Activated CD8-positive, alpha-beta T cell treated with anti-CD3 and anti-CD28 coated beads for 36 hours (primary cell): ENCODE measurements at regions of chr17 and their contacts with region 1.

Region 1: GRCh38 chr17:63478791-63479494 is 2.1 kb downstream of the ACE start:
- DNase-seq: peak; percentile 88
- ATAC-seq: peak; percentile 87
- H3K4me3 Mint-ChIP-seq: no peak overlapping the region
- H3K27ac Mint-ChIP-seq: no peak overlapping the region
- H3K4me1 Mint-ChIP-seq: peaks cover 10% of the 10 kb centered on the region
- H3K27me3 Mint-ChIP-seq: peaks cover 29% of the 10 kb centered on the region
- CTCF ChIP-seq: peak; percentile 74

Region 2: DNA sequence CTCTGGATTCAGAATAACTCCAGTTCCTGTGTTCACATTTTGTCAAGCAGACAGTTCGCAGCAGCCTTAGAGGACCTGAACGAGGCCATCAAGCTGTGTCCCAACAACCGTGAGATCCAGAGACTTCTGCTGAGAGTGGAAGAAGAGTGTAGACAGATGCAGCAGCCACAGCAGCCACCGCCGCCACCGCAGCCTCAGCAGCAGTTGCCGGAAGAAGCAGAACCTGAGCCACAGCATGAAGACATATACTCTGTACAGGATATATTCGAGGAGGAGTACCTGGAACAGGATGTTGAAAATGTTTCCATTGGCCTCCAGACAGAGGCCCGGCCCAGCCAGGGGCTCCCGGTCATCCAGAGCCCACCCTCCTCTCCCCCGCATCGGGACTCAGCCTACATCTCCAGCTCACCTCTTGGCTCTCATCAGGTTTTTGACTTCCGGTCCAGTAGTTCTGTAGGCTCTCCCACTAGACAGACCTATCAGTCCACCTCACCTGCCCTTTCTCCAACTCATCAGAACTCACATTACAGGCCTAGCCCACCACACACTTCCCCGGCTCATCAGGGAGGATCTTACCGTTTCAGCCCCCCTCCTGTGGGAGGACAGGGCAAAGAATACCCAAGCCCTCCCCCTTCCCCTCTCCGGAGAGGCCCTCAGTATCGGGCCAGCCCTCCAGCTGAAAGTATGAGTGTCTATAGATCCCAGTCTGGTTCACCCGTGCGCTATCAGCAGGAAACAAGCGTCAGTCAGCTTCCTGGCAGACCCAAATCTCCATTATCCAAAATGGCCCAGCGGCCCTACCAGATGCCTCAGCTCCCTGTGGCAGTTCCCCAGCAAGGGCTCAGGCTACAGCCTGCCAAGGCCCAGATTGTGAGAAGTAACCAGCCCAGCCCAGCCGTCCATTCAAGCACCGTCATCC is 58.7 kb before region 1 on chr17:
- CTCF ChIA-PET with region 1: interaction called, 231 read pairs
- POLR2A ChIA-PET with region 1: interaction called, 6 read pairs
- intact Hi-C with region 1: loop called (anchors 2 kb)
- DNase-seq: peak; percentile 73
- ATAC-seq: peak; percentile 73
- H3K4me3 Mint-ChIP-seq: peak overlapping the region; percentile 1
- H3K27ac Mint-ChIP-seq: peak overlapping the region; percentile 69
- H3K4me1 Mint-ChIP-seq: peaks cover 11% of the 10 kb centered on the region
- H3K27me3 Mint-ChIP-seq: no peaks in the 10 kb centered on the region
- CTCF ChIP-seq: no peak

Region 3: GRCh38 chr17:63434876-63435684 is 43.9 kb before region 1 on chr17:
- CTCF ChIA-PET with region 1: interaction called, 231 read pairs
- POLR2A ChIA-PET with region 1: no interaction called
- intact Hi-C with region 1: no loop called
- DNase-seq: peak; percentile 58
- ATAC-seq: peak; percentile 71
- H3K4me3 Mint-ChIP-seq: peak overlapping the region; percentile 35
- H3K27ac Mint-ChIP-seq: peak overlapping the region; percentile 80
- H3K4me1 Mint-ChIP-seq: peaks cover 32% of the 10 kb centered on the region
- H3K27me3 Mint-ChIP-seq: no peaks in the 10 kb centered on the region
- CTCF ChIP-seq: no peak

Region 4: DNA sequence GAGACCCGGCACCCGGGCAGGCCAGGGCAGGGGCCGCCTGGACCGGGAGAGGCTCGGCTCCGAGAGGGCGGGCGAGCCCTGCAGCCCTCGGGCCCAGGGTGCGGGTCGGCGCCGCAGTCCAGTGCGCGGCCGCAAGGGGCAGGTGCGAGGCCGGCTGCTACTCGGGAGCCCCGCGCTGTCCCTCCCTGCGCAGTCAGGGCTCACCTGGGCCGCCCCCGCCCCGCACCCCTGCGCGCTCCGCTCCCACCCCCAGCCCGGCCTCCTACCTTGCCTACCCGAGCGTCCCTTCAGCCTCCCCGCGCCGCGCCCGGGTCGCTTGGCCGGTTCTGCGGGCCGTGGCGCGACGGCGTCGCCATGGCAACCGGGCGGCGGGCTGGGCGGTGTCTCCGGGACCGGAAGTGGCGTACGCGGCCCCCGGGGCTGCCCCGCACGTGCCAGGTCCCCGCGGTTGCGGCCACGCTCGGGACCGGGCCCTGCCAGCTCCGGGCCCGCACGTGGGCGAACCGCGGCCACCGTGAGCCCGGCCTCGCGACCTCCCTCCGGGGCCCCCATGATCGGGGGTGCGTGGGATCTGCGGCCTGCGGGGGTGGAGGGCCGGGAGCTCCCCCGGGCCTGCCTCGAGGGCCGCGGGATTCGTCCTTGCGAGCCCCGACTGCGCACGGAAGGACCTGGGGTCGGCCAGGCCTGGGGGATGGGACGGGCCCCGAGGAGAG is 32.8 kb before region 1 on chr17 and contains the start of gene CYB561:
- CTCF ChIA-PET with region 1: interaction called, 58 read pairs
- POLR2A ChIA-PET with region 1: interaction called, 4 read pairs
- intact Hi-C with region 1: no loop called
- DNase-seq: peak; percentile 68
- ATAC-seq: peak; percentile 68
- H3K4me3 Mint-ChIP-seq: peak within 1 kb of the TSS; percentile 69
- H3K27ac Mint-ChIP-seq: peak within 1 kb of the TSS; percentile 80
- H3K4me1 Mint-ChIP-seq: peaks cover 21% of the 10 kb centered on the region
- H3K27me3 Mint-ChIP-seq: peaks cover 3% of the 10 kb centered on the region
- CTCF ChIP-seq: peak; percentile 53
- total RNA-seq, gene CYB561: 1.5 to 2.2 TPM

Region 5: DNA sequence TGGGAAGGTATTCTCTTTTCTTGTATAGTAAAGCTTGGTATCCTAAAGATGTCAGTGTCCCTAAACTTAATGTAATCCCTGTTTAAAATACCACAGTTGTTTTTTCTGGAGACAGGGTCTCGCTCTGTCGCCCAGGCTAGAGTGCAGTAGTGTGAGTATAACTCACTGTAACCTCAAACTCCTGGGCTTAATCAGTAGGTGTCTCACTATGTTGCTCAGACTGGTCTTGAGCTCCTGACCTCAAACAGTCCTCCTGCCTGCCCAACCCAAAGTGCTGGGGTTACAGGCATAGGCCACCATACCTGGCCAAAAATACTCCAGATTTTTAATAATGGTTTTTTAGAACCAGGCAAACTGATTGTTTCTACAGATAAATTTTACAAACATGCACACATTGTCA is 79.5 kb after region 1 on chr17:
- CTCF ChIA-PET with region 1: no interaction called
- POLR2A ChIA-PET with region 1: no interaction called
- intact Hi-C with region 1: no loop called
- DNase-seq: no peak
- ATAC-seq: no peak
- H3K4me3 Mint-ChIP-seq: no peak overlapping the region
- H3K27ac Mint-ChIP-seq: no peak overlapping the region
- H3K4me1 Mint-ChIP-seq: peaks cover 61% of the 10 kb centered on the region
- H3K27me3 Mint-ChIP-seq: no peaks in the 10 kb centered on the region
- CTCF ChIP-seq: no peak